GM12878 (cell line): ENCODE measurements at regions of chr3 and their contacts with region 1.

Region 1: DNA sequence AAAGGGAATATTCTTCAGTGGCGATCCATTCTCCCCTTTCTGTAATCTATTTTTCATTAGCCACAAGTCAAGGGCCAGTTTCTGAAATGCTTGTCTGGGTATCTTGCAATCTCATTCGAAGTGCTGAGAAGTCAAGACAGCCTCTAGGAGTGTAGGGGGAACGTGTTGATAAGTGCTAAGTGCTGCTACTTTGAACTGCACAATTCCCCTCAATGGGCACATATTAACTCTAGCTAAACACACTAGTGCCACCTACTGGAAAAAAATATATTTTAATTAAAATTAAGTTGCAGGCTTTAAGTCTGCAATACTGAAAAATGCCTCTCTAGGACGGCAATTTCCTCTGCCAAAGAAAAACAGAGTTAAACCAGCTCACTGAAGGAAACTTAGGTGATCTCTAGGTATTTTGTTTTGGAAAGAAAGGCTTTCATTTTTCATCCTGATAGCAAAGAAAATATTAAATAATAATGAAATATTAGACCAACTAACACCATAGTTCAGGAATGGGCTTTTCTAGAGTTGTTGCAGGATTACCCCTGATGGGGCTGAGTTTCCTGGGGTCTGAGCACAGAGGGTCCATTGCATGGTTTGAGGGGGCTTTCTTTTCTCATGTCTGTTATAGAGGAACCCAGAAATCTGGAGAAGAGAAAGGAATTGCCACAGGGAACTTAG is 181.9 kb upstream of the KBTBD8 start:
- DNase-seq: no peak
- ATAC-seq: peak; percentile 91
- H3K4me3 ChIP-seq: no peak overlapping the region
- H3K27ac ChIP-seq: no peak overlapping the region
- H3K4me1 ChIP-seq: no peaks in the 10 kb centered on the region
- H3K27me3 ChIP-seq: no peaks in the 10 kb centered on the region
- CTCF ChIP-seq: peak; percentile 22 to 62 (median 43); a peak in 5 of 6 replicates
- EP300 ChIP-seq: no peak
- POLR2A ChIP-seq: no peak
- RAD21 ChIP-seq: peak; percentile 79

Region 2: GRCh38 chr3:66500576-66501482 is 315.4 kb before region 1 on chr3 and contains the start of gene LRIG1:
- CTCF ChIA-PET with region 1: interaction called, 3 read pairs
- POLR2A ChIA-PET with region 1: no interaction called
- RAD21 ChIA-PET with region 1: no interaction called
- SMC1A ChIA-PET with region 1: no interaction called
- in situ Hi-C with region 1: no loop called
- intact Hi-C with region 1: loop called (anchors 10 kb)
- DNase-seq: peak; percentile 68
- ATAC-seq: peak; percentile 96
- H3K4me3 ChIP-seq: peak within 1 kb of the TSS; percentile 64
- H3K27ac ChIP-seq: no peak within 1 kb of the TSS
- H3K4me1 ChIP-seq: peaks cover 4% of the 10 kb centered on the region; the same call in 1 of the 2 replicates
- H3K27me3 ChIP-seq: peaks cover 2 to 4% of the 10 kb centered on the region in 2 experiments; a peak in 3 of 4 replicates
- CTCF ChIP-seq: peak in 2 of 3 experiments; percentile 13 to 20; a peak in 3 of 6 replicates
- EP300 ChIP-seq: no peak
- POLR2A ChIP-seq: peak; percentile 84
- RAD21 ChIP-seq: peak; percentile 47
- polyA plus RNA-seq, gene LRIG1: 0.84 to 2.5 TPM

Region 3: GRCh38 chr3:66778777-66779176 is 37.4 kb before region 1 on chr3:
- CTCF ChIA-PET with region 1: no interaction called
- POLR2A ChIA-PET with region 1: no interaction called
- RAD21 ChIA-PET with region 1: no interaction called
- SMC1A ChIA-PET with region 1: no interaction called
- in situ Hi-C with region 1: no loop called
- intact Hi-C with region 1: no loop called
- DNase-seq: no peak
- ATAC-seq: peak; percentile 42
- H3K4me3 ChIP-seq: no peak overlapping the region
- H3K27ac ChIP-seq: no peak overlapping the region
- H3K4me1 ChIP-seq: no peaks in the 10 kb centered on the region
- H3K27me3 ChIP-seq: peaks cover 0 to 2% of the 10 kb centered on the region in 2 experiments; a peak in 2 of 4 replicates
- CTCF ChIP-seq: no peak
- EP300 ChIP-seq: no peak
- POLR2A ChIP-seq: no peak
- RAD21 ChIP-seq: no peak